ENCODE measurements at regions of chr3 and their contacts with region 1.

Region 1: DNA sequence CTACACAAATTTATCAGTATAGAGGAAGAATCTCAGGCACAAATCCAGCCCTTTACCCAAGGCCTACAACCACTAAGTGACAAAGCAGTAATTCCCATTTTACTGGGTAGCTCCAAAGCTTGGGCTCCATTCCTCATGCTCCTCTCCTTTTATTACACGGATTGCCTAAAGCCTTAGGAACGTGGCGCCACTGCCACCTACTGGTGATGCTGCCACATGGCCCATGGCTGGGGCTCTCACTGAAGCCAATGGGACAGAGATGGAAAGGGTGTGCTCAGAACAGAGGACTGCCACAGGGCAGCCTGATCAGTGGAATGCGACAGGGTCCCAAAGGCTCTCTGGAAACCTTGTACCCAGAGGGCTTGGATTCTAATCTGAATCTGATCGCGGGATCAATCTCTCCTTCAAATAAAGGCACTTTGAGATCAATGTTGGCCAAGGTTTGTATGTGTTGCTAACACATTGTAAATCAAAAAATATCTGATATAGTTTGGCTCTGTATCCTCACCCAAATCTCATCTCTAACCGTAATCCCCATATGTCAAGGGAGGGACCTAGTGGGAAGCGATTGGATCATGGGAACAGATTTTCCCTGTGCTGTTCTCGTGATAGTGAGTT is 33.5 kb upstream of the LYZL4 start:
- DNase-seq: peak; percentile 84
- ATAC-seq: peak; percentile 89

Region 2: DNA sequence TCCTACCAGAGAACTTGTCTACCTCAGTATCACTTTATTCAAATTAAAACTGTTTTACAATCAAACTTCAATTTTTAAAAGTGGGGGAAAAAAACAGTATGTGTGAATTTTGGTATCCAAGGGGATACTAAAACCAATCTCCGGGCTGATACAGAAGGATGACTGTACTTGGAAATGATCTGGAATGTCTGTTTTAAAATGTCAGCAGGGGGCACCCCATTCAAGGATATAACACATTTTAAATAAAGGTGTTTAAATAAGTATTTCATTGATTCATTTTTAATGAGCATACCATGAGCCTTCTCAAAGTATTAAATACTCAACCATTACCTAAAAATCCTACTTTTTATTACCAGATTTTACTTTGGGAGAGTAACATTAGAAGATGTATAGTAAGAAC is 550.0 kb before region 1 on chr3:
- intact Hi-C with region 1: loop called (anchors 2 kb)
- DNase-seq: no peak
- ATAC-seq: no peak

Region 3: DNA sequence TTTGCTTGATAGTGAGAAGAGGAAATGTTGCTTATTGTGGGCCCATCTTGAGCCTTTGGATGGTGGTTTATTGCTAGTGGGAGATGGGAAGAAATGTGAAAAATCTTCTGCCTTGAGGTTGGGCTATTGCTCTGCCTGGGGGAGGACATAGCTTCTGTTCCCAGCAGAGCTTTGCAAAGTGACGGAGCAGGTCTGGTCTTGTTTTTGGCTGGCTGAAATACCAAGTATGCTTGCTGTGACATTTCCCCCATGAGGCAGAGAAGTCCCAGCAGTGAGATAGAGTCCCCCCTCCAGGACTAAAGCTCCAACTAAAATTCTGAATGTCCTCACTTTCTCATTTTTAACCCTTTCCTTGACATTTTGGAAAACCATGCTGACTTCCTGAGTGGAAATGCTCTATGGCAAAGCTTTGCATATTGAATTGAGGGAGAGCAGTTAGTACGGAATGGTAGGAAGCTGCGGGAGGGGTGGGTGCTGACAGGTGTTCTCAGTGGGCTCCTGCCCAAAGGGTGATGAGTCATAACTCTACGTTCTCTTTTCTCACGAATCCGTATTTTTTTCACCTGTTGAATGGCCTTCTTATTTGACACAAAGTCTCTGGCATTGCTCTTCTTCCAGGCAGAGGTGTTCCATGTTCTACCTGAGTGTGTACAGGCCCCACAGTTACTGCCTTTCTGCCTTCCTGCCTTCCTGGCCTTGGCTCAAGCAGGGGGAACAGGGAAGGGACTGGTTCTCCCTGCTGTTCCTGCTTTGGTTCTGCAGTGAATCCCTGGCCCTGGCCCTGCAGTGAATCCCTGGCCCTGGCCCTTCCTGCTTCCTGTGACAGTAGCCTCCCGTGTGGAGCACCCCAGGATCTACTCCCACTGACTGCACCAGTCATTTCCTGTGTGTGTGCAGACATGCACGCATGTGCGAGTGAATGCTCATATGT is 321.0 kb before region 1 on chr3:
- intact Hi-C with region 1: loop called (anchors 10 kb)
- DNase-seq: no peak
- ATAC-seq: peak; percentile 26

Region 4: DNA sequence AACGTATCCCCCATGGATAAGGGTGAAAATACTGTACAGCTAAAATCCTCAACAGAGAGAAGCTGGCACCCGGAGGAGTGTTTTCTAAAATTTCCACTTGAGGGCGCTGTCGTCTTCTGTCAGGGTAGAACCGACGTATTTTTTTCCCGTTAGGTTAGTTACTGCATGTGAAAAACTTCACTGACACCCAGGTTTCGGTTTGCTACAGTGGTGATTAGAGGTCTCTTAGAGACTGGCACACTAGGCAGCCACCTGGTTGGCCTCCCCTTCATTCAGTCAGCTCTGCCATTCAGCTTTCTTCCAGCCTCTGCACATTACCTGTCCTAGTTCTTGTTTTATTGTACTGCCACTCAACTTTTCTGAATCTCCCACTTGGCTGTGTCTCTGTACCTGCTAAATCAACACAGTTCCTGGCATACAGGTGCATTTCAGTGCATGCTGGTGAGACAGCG is 196.3 kb before region 1 on chr3:
- intact Hi-C with region 1: loop called (anchors 2 kb)
- DNase-seq: no peak
- ATAC-seq: peak; percentile 23

Measured in Right ventricle myocardium inferior (tissue), 1 donor.